Activated B cell treated with CpG ODN at 0.5 μM for 24 hours (primary cell): ENCODE measurements at regions of chr4 and their contacts with region 1.

Region 1: GRCh38 chr4:112379306-112379705 is 82.1 kb downstream of the ALPK1 start:
- DNase-seq: no peak
- ATAC-seq: no peak
- H3K4me3 Mint-ChIP-seq: no peak overlapping the region
- H3K27ac Mint-ChIP-seq: no peak overlapping the region
- H3K4me1 Mint-ChIP-seq: peaks cover 32% of the 10 kb centered on the region
- H3K27me3 Mint-ChIP-seq: no peaks in the 10 kb centered on the region
- CTCF ChIP-seq: no peak

Region 2: GRCh38 chr4:112199040-112199439 is 180.3 kb before region 1 on chr4:
- CTCF ChIA-PET with region 1: no interaction called
- POLR2A ChIA-PET with region 1: no interaction called
- intact Hi-C with region 1: no loop called
- DNase-seq: no peak
- ATAC-seq: no peak
- H3K4me3 Mint-ChIP-seq: no peak overlapping the region
- H3K27ac Mint-ChIP-seq: no peak overlapping the region
- H3K4me1 Mint-ChIP-seq: no peaks in the 10 kb centered on the region
- H3K27me3 Mint-ChIP-seq: no peaks in the 10 kb centered on the region
- CTCF ChIP-seq: no peak

Region 3: DNA sequence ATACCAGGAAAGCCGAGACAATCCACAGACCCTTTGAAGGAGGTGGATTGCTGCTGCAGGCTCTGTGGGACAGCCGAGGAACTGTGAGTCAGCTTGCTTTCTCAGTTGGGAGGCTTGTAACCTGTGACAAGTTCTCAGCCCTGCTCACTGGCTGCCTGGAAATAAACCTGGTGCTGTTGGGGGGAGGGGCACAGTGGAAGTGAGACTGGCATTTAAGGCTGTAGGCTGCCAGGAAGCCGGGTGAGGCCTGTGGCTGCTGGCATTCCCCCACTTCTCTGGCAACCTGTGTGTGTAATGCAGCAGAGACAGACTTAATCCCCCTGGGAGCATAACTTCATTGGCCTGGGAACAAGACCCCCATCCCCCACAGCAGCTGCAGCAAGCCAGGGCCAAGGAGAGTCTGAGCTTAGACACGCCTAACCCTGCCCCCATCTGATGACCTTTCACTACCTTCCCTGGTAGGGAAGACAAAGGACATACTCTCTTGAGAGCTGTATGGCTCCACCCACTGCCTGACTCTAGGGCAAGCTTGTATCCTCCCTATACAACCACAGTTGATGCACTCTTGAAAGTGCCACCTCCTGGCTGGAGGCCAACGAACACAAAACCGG is 18.0 kb before region 1 on chr4:
- CTCF ChIA-PET with region 1: interaction called, 6 read pairs
- POLR2A ChIA-PET with region 1: interaction called, 8 read pairs
- intact Hi-C with region 1: loop called (anchors 1 kb)
- DNase-seq: peak; percentile 32
- ATAC-seq: peak; percentile 91
- H3K4me3 Mint-ChIP-seq: peak overlapping the region; percentile 20
- H3K27ac Mint-ChIP-seq: peak overlapping the region; percentile 65
- H3K4me1 Mint-ChIP-seq: peaks cover 20% of the 10 kb centered on the region
- H3K27me3 Mint-ChIP-seq: no peaks in the 10 kb centered on the region
- CTCF ChIP-seq: no peak